A673 (cell line): ENCODE measurements at regions of chr2 and their contacts with region 1.

Region 1: GRCh38 chr2:217127744-217128143 is 267.9 kb upstream of the TNP1 start:
- DNase-seq: no peak
- H3K4me3 ChIP-seq: no peak overlapping the region
- H3K27ac ChIP-seq: no peak overlapping the region
- H3K4me1 ChIP-seq: no peaks in the 10 kb centered on the region
- H3K27me3 ChIP-seq: no peaks in the 10 kb centered on the region
- CTCF ChIP-seq: no peak

Region 2: DNA sequence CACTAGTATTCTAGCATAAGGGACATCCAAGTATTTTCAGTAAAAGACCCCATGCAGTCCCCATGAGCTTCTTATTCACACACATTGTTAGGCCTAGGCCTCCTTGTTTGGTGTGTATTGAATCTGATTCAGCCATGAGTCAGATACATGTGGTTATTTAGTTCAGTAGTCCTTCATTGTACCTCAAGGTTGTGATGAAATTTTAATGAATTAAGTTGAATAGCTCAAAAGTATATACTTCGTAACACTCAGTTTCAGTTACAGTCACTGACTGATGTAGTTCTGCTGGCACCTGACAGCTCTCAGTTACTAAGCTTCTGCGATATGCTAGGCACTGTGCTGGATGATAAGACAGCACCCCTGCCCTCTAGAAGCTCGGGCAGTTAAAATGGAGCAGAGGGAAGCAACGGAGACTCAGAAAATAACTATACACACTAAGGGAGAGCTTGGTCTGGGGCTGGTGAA is 932.1 kb before region 1 on chr2:
- CTCF ChIA-PET with region 1: no interaction called
- POLR2A ChIA-PET with region 1: interaction called, 11 read pairs
- intact Hi-C with region 1: no loop called
- DNase-seq: peak; percentile 15
- H3K4me3 ChIP-seq: no peak overlapping the region
- H3K27ac ChIP-seq: no peak overlapping the region
- H3K4me1 ChIP-seq: no peaks in the 10 kb centered on the region
- H3K27me3 ChIP-seq: no peaks in the 10 kb centered on the region
- CTCF ChIP-seq: no peak